ENCODE measurements at regions of chr10 and their contacts with region 1.

Region 1: DNA sequence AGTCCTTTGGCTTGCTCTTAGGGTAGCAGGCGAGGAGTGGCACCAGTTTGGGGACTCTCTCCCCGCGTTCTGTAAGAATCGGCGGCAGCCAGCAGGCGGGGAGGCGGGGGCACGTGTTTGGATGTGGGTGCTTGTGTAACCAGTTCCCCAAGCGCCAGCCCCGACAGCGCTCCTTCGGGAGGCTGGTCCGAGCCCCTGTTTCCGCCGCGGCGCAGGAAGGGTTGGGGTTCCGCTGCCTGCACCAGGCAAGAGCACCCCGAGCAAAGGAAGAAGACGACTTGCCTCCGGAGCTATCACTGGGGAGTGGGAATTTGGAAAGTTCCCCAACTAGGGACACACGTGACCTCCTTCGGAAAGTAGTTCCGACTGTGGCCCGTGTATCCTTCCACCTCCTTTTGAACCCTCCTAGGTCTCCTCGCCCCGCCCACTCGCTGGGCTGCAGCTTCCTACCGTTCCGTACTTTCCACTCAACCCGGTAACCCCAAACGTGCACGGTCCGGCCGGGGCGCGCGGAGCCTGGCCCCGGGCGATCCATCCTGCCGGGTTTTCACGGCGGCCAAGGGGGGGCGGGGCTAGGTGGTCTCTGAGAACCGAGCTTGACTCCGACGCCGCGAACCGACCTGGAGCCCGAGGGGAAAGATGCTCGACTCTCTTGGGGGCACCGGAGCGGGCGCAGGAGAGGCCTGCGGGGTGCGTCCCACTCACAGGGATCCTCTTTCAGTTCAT is 1.2 kb downstream of the KLLN start:
- DNase-seq: peak; percentile 98
- H3K4me3 ChIP-seq: peak overlapping the region; percentile 69
- H3K4me3 Mint-ChIP-seq: peak overlapping the region; percentile 97
- H3K27ac Mint-ChIP-seq: peak overlapping the region; percentile 93
- H3K4me1 ChIP-seq: 0 out of 2 replicates have a peak, but pooled peaks cover 6% of the 10 kb centered on the region
- H3K4me1 Mint-ChIP-seq: peaks cover 29% of the 10 kb centered on the region
- H3K27me3 ChIP-seq: no peaks in the 10 kb centered on the region
- H3K27me3 Mint-ChIP-seq: no peaks in the 10 kb centered on the region
- CTCF ChIP-seq: no peak

Region 2: GRCh38 chr10:87817609-87818504 is 44.3 kb before region 1 on chr10 and contains the start of gene ATAD1:
- CTCF ChIA-PET with region 1: interaction called, 4 read pairs
- POLR2A ChIA-PET with region 1: interaction called, 15 read pairs
- intact Hi-C with region 1: loop called (anchors 2 kb)
- DNase-seq: peak; percentile 91 to 92
- H3K4me3 ChIP-seq: peak within 1 kb of the TSS; percentile 66
- H3K4me3 Mint-ChIP-seq: peak within 1 kb of the TSS; percentile 99
- H3K27ac Mint-ChIP-seq: peak within 1 kb of the TSS; percentile 96
- H3K4me1 ChIP-seq: peaks cover 24% of the 10 kb centered on the region
- H3K4me1 Mint-ChIP-seq: peaks cover 17% of the 10 kb centered on the region
- H3K27me3 ChIP-seq: no peaks in the 10 kb centered on the region
- H3K27me3 Mint-ChIP-seq: no peaks in the 10 kb centered on the region
- CTCF ChIP-seq: peak in 1 of 2 experiments; percentile 30
- total RNA-seq, gene ATAD1: 48.8 and 51.6 TPM in 2 replicates

Region 3: DNA sequence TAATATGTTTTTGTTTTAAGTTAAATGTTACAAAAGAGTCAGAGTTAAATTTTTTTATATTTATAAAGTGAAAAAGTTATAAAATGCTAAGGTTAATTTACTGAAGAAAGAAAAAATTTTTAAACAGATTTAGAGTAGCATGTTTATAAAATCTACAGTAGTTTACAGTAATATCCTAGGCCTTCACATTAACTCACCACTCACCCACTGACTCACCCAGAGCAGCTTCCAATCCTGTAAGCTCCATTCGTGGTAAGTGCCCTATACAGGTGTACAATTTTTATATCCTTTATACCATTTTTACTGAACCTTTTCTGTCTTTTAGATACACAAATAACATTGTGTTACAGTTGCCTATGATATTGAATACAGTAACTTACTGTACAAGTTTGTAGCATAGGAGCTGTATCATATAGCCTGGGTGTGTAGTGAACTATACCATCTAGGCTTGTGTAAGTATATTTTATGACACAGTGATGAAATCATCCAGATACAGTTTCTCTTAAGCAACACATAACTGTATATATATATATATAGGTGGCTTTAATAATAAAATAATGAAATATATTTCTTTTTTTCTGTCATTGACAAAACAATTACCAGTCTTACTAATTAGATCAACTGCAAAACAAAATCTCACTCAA is 80.9 kb after region 1 on chr10:
- CTCF ChIA-PET with region 1: no interaction called
- POLR2A ChIA-PET with region 1: no interaction called
- intact Hi-C with region 1: loop called (anchors 5 kb)
- DNase-seq: no peak
- H3K4me3 ChIP-seq: no peak overlapping the region
- H3K4me3 Mint-ChIP-seq: no peak overlapping the region
- H3K27ac Mint-ChIP-seq: no peak overlapping the region
- H3K4me1 ChIP-seq: no peaks in the 10 kb centered on the region
- H3K4me1 Mint-ChIP-seq: no peaks in the 10 kb centered on the region
- H3K27me3 ChIP-seq: no peaks in the 10 kb centered on the region
- H3K27me3 Mint-ChIP-seq: no peaks in the 10 kb centered on the region
- CTCF ChIP-seq: no peak

Region 4: GRCh38 chr10:88227342-88228018 is 365.4 kb after region 1 on chr10:
- CTCF ChIA-PET with region 1: no interaction called
- POLR2A ChIA-PET with region 1: no interaction called
- intact Hi-C with region 1: loop called (anchors 5 kb)
- DNase-seq: no peak
- H3K4me3 ChIP-seq: no peak overlapping the region
- H3K4me3 Mint-ChIP-seq: no peak overlapping the region
- H3K27ac Mint-ChIP-seq: no peak overlapping the region
- H3K4me1 ChIP-seq: peaks cover 21% of the 10 kb centered on the region
- H3K4me1 Mint-ChIP-seq: peaks cover 11% of the 10 kb centered on the region
- H3K27me3 ChIP-seq: no peaks in the 10 kb centered on the region
- H3K27me3 Mint-ChIP-seq: no peaks in the 10 kb centered on the region
- CTCF ChIP-seq: no peak

Region 5: DNA sequence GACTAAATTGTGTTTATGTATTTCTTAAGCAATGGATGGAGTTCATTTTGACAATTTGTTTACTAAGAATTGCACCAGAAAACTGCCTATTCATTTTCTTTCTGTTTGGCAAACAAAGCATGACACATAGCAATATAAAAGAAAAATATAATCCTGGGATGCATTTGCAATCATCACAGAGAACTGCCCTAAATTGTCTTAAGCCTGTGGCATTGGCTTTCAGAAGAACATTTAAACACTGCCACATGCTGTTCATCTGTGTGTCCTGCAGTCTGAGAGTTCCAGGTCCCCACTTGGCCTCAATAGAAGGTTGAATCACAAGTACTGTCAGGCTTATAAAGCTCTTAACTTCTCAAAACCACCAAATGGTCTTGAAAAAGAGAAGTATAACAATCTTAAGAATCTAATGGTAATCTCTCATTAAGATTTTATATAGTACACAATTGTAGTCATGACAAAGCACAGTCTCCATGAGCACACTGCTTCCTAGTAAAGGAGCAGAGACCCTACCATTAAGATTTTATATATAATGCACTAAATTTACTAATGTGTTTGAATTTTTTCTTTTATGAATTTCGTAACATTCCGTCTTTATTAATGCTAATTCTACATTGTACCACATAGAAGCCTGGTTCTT is 691.1 kb after region 1 on chr10:
- CTCF ChIA-PET with region 1: no interaction called
- POLR2A ChIA-PET with region 1: no interaction called
- intact Hi-C with region 1: loop called (anchors 1 kb)
- DNase-seq: peak; percentile 40 to 42
- H3K4me3 ChIP-seq: no peak overlapping the region
- H3K4me3 Mint-ChIP-seq: no peak overlapping the region
- H3K27ac Mint-ChIP-seq: no peak overlapping the region
- H3K4me1 ChIP-seq: no peaks in the 10 kb centered on the region
- H3K4me1 Mint-ChIP-seq: no peaks in the 10 kb centered on the region
- H3K27me3 ChIP-seq: no peaks in the 10 kb centered on the region
- H3K27me3 Mint-ChIP-seq: peaks cover 8% of the 10 kb centered on the region
- CTCF ChIP-seq: peak; percentile 64 to 88